Ovary (tissue), 10 donors: ENCODE measurements at regions of chr1 and their contacts with region 1.

Region 1: GRCh38 chr1:39204441-39205081 is at the start of gene MACF1:
- DNase-seq: peak; percentile 77 to 87 (median 83)
- H3K4me3 ChIP-seq: peak within 1 kb of the TSS; percentile 48
- H3K27ac ChIP-seq: peak within 1 kb of the TSS; percentile 78 to 95
- H3K4me1 ChIP-seq: peaks cover 9% of the 10 kb centered on the region
- H3K27me3 ChIP-seq: no peaks in the 10 kb centered on the region
- CTCF ChIP-seq: peak in 2 of 3 donors; percentile 72 to 77
- EP300 ChIP-seq: no peak
- POLR2A ChIP-seq: peak; percentile 73
- total RNA-seq, gene MACF1: 212 to 331 (median 269) TPM

Region 2: DNA sequence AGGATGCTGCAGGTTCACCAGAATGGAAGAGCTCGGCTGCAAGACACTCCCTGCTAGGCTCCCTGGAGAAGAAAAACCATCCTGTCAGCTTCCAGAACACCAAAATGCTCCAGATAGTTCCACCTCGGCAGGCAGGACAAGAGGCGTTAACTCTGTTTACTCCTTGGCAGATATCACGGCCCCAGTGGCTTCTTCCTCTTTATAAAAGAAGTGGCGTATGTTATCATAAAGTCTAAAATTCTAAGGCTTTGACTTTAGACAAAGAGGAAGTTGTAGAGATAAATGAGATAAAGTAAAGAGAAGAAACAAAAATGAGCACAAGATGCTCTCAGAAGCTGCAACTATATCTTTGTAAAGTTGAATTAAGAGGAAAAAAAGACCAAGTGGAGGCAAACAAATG is 1320.9 kb before region 1 on chr1:
- intact Hi-C with region 1: no loop called
- DNase-seq: no peak
- H3K4me3 ChIP-seq: no peak overlapping the region
- H3K27ac ChIP-seq: no peak overlapping the region
- H3K4me1 ChIP-seq: no peaks in the 10 kb centered on the region
- H3K27me3 ChIP-seq: no peaks in the 10 kb centered on the region
- CTCF ChIP-seq: no peak
- EP300 ChIP-seq: no peak
- POLR2A ChIP-seq: no peak

Region 3: GRCh38 chr1:39258146-39258924 is 53.8 kb after region 1 on chr1:
- intact Hi-C with region 1: loop called in 3 of 4 experiments (anchors 5 to 10 kb)
- DNase-seq: peak; percentile 65 to 83 (median 73)
- H3K4me3 ChIP-seq: no peak overlapping the region
- H3K27ac ChIP-seq: peak overlapping the region in 1 of 2 donors; percentile 29
- H3K4me1 ChIP-seq: peaks cover 15% of the 10 kb centered on the region
- H3K27me3 ChIP-seq: no peaks in the 10 kb centered on the region
- CTCF ChIP-seq: peak; percentile 49 to 88 (median 82)
- EP300 ChIP-seq: no peak
- POLR2A ChIP-seq: no peak